Dorsolateral prefrontal cortex (tissue), 120 donors: ENCODE measurements at regions of chr22 and their contacts with region 1.

Region 1: DNA sequence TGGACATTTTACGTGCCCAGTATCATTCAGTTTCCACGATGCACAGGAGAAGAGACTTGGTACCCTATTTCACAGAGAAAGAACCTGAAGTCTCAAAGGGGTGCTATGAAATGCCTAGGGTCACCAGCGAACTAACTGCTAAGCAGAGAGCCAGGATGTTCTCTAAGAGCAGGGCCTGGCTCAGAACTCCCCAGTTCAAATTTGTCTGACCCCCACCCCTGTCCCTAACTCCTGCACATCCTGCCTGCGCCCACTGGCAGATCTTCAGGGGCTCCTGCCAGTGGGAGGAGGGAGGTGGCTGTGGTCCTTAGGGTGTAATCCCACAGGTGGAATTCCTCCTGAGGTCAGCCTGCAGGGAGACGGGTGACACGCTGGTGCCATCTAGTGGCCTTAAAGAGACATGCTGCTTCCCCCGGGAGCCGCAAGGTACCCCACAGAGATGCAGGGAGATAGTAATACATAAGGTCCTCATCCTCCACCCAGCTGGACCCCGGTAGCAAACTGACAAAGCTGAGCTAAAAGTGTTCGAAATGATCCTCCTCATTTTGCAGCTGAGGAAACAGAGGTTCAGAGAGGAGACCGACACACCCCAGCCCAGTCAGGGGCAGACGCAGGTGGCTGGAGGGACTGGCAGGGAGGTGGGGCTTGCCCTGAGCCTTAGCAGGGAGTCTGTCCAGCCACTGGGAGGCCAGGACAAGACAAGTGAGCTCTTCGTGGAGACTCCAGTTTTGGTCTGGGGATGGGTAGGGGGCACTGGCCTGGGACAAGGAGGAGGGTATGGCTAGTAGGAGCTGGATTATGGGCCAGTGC is 34.1 kb downstream of the MB start:
- DNase-seq: peak; percentile 49 to 80 (median 64)
- H3K4me3 ChIP-seq: no peak overlapping the region
- H3K27ac ChIP-seq: peak overlapping the region in 2 of 59 donors; percentile 3
- H3K27me3 ChIP-seq: no peaks in the 10 kb centered on the region
- CTCF ChIP-seq: peak; percentile 72 to 98 (median 94)

Region 2: GRCh38 chr22:35350539-35351503 is 232.2 kb before region 1 on chr22:
- intact Hi-C with region 1: loop called (anchors 2 to 5 kb)
- DNase-seq: peak; percentile 67 to 94 (median 89)
- H3K4me3 ChIP-seq: peak overlapping the region; percentile 31 to 76 (median 61)
- H3K27ac ChIP-seq: peak overlapping the region in 55 of 59 donors; percentile 1 to 91 (median 64)
- H3K27me3 ChIP-seq: no peaks in the 10 kb centered on the region
- CTCF ChIP-seq: peak; percentile 82 to 97 (median 92)

Region 3: DNA sequence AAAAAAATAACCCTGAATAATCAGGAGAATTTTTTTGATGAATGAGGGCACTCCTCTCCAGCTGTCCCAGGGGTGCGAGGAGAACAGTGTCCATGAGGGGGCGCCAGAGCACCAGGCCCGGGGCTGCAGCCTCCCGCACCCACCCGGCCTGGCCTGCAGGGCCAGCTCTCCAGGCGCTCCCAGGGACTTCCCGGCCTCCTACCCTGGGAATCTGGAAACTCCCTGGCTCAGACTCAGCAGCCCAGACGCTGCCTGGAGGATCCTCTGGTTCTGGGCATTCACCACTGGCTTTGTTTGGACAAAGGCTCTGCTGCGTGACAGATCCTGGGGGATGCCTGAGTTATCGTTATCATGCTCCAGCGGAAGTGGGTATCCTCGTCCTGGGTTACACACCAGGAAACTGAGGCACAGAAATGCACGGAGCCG is 152.2 kb before region 1 on chr22:
- intact Hi-C with region 1: loop called (anchors 1 to 2 kb)
- DNase-seq: peak; percentile 74 to 91 (median 82)
- H3K4me3 ChIP-seq: no peak overlapping the region
- H3K27ac ChIP-seq: peak overlapping the region in 21 of 59 donors; percentile 4 to 57 (median 33)
- H3K27me3 ChIP-seq: no peaks in the 10 kb centered on the region
- CTCF ChIP-seq: peak; percentile 80 to 98 (median 96)

Region 4: GRCh38 chr22:35454416-35455054 is 128.5 kb before region 1 on chr22:
- intact Hi-C with region 1: loop called in 1 of 2 experiments (anchors 5 kb)
- DNase-seq: peak in 1 of 10 donors; percentile 29
- H3K4me3 ChIP-seq: no peak overlapping the region
- H3K27ac ChIP-seq: no peak overlapping the region
- H3K27me3 ChIP-seq: no peaks in the 10 kb centered on the region
- CTCF ChIP-seq: peak in 51 of 56 donors; percentile 14 to 68 (median 43)

Region 5: DNA sequence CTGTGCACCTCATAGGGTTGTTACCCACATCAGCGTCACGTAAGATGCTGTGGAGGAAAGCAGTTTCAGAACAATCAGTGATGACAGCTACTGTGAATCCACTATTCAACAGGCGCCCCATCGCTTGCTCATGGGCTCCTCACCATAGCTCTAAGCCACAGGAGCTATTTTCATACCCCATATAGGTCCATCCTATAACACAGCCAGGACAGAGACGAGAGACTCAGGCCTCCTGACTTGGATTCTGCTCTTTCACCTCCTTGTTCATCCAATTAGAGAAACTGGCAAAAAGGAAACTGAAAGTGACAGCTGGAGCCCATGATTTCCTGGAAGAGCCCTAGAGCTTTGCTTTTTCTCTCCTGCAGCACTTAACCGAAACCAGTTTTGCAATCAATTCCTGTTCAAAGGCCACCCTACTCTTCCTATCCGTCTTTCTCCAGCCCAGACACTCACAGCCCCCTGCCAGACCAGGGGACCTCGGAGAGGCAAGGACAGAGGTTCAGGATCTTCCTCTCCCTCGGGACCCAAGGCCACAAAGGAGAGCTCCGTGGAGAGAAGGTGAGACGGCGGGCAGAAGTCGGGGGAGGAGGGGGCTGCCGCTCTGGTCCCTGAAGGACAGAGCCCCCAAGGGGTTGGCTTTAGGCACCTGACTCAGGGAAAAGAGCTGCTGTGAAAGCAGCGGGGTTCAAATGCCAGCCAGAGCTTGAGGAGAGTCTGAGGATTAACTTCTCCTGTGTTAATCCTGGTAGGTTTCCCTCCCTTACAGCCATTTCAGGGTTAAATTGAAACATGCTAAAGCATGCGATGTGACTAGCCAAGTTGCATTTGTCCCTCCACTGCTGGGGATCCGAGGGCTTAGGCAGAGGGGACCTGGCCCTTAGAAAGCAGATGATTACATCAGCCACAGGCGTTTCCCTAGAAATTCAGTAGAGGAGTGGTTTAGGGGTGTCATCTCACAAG is 65.3 kb after region 1 on chr22 and contains the start of gene APOL6:
- intact Hi-C with region 1: no loop called
- DNase-seq: no peak
- H3K4me3 ChIP-seq: peak within 1 kb of the TSS; percentile 42 to 84 (median 65)
- H3K27ac ChIP-seq: peak within 1 kb of the TSS in 58 of 59 donors; percentile 33 to 93 (median 74)
- H3K27me3 ChIP-seq: no peaks in the 10 kb centered on the region
- CTCF ChIP-seq: no peak
- total RNA-seq, gene APOL6: 2.4 to 20.4 (median 4.9) TPM